ENCODE measurements at regions of chr12 and their contacts with region 1.

Region 1: DNA sequence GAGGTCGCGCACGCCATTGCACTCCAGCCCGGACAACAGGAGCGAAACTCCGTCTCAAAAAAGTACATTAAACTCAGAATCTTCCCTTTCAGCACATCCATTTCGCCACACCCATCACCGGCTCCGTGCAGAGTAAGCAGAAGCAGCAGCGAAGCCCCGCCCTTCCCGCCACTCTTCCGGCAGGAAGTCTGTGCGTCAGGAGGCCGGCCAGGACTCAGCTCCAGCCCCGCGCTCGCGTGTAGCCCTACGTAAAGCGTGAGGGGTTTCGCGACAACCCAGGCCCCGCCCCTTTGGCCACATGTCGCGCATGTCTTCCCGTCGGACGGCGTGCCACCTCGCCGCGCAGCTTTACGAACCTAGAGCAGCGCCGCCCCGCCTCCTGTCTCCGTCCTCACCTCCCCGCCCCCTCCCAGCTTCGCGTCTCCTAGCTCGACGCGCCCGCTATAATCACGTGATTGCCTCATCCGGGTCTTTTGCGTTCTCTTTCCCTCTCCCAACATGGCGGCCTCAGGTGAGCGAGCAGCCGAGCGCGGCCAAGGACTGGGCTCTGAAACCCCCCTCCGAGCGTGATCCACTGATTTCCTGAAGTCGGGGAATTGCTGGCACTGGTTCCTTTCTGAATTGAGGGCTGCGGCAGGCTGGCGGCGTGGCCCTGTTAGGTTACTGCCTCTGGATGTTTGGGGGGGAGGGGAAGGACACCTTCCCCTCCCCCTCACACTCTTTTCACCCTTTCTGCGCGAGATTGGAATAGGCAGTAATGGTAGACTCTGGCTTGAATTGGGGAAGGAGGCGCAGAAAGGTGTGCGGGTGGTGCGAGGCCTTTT is at the start of gene EIF4B:
- DNase-seq: peak; percentile 97
- ATAC-seq: peak; percentile 96
- H3K4me3 ChIP-seq: peak within 1 kb of the TSS; percentile 89 to 93 (median 92)
- H3K27ac ChIP-seq: peak within 1 kb of the TSS; percentile 99
- H3K4me1 ChIP-seq: peaks cover 47% of the 10 kb centered on the region
- H3K27me3 ChIP-seq: no peaks in the 10 kb centered on the region; a peak in 1 of 5 replicates
- CTCF ChIP-seq: peak; percentile 22; the same call in 1 of the 2 replicates
- EP300 ChIP-seq: no peak; a peak in 2 of 4 replicates
- POLR2A ChIP-seq: peak; percentile 52 to 70; a peak in 3 of 4 replicates
- RAD21 ChIP-seq: no peak
- total RNA-seq, gene EIF4B: 548 and 779 TPM in 2 replicates

Region 2: DNA sequence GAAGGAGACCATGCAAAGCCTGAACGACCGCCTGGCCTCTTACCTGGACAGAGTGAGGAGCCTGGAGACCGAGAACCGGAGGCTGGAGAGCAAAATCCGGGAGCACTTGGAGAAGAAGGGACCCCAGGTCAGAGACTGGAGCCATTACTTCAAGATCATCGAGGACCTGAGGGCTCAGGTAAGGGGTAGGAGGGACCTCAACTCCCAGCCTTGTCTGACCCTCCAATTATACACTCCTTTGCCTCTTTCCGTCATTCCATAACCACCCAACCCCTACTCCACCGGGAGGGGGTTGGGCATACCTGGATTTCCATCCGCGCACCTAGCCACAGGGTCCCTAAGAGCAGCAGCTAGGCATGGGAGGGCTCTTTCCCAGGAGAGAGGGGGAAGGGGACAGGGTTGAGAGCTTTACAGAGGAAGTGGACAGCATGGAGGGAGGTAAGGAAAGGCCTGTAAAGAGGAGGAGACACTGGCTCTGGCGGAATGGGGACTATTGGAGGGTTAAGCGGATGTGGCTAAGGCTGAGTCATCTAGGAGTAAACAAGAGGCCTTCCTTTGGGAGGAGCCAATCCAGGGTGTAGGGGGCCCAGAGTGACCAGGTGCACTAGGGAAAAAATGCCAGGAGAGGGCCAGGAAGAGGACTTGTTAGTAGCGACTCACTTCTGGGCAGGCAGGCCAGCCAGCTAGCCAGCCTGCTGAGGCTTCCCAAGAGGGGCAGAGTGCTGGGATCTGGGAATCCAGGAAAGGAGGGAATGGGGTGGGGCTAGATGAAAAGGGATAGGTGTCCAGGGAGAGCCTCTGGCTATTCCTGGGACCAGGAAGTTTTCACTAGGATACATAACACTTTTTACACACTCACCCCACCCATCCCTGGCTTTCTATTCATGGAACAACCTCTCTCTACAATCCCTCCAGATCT is 56.5 kb before region 1 on chr12:
- CTCF ChIA-PET with region 1: no interaction called
- POLR2A ChIA-PET with region 1: interaction called, 23 read pairs
- in situ Hi-C with region 1: no loop called
- intact Hi-C with region 1: no loop called
- DNase-seq: peak; percentile 98
- ATAC-seq: peak; percentile 83
- H3K4me3 ChIP-seq: peak overlapping the region; percentile 88 to 100 (median 99)
- H3K27ac ChIP-seq: peak overlapping the region; percentile 100
- H3K4me1 ChIP-seq: peaks cover 68% of the 10 kb centered on the region
- H3K27me3 ChIP-seq: peaks cover 0 to 2% of the 10 kb centered on the region in 2 experiments; a peak in 1 of 5 replicates
- CTCF ChIP-seq: peak; percentile 42; the same call in 1 of the 2 replicates
- EP300 ChIP-seq: peak in 1 of 2 experiments; percentile 90; a peak in 2 of 4 replicates
- POLR2A ChIP-seq: peak; percentile 82 to 96
- RAD21 ChIP-seq: peak; percentile 81

Region 3: DNA sequence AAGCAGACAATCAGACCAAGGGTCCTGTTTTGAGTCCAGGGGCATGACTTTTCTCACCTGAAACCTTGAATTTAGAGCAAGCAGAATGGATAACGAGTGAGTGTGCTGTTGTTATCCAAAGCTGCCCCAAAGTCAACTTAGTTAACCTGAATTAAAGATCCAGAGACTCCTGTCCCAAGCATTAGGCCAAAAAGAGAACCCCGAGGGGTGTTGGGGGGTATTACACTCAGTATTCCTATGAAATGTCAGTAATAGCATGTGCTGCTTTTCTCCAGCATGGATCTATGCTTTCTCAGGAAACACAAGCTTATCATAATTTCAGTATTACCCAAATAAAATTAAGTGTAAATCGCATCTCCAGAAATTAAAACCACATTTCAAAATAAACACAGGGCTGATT is 19.1 kb after region 1 on chr12:
- CTCF ChIA-PET with region 1: no interaction called
- POLR2A ChIA-PET with region 1: interaction called, 14 read pairs
- in situ Hi-C with region 1: no loop called
- intact Hi-C with region 1: no loop called
- DNase-seq: no peak
- ATAC-seq: peak; percentile 46; the same call in 2 of the 3 replicates
- H3K4me3 ChIP-seq: no peak overlapping the region
- H3K27ac ChIP-seq: no peak overlapping the region
- H3K4me1 ChIP-seq: peaks cover 14% of the 10 kb centered on the region
- H3K27me3 ChIP-seq: no peaks in the 10 kb centered on the region
- CTCF ChIP-seq: no peak
- EP300 ChIP-seq: no peak
- POLR2A ChIP-seq: no peak
- RAD21 ChIP-seq: no peak

Region 4: GRCh38 chr12:53047221-53048042 is 41.2 kb after region 1 on chr12:
- CTCF ChIA-PET with region 1: no interaction called
- POLR2A ChIA-PET with region 1: interaction called, 83 read pairs
- in situ Hi-C with region 1: no loop called
- intact Hi-C with region 1: no loop called
- DNase-seq: peak; percentile 44
- ATAC-seq: peak; percentile 2
- H3K4me3 ChIP-seq: peak overlapping the region; percentile 77 to 91 (median 83)
- H3K27ac ChIP-seq: peak overlapping the region; percentile 89
- H3K4me1 ChIP-seq: peaks cover 79% of the 10 kb centered on the region
- H3K27me3 ChIP-seq: no peaks in the 10 kb centered on the region; a peak in 1 of 5 replicates
- CTCF ChIP-seq: peak; percentile 3; the same call in 1 of the 2 replicates
- EP300 ChIP-seq: no peak
- POLR2A ChIP-seq: 0 out of 4 replicates have a peak, but pooled peaks of 1 of the 2 experiments have one; percentile 3
- RAD21 ChIP-seq: 0 out of 2 replicates have a peak, but pooled peaks have one; percentile 18

Region 5: DNA sequence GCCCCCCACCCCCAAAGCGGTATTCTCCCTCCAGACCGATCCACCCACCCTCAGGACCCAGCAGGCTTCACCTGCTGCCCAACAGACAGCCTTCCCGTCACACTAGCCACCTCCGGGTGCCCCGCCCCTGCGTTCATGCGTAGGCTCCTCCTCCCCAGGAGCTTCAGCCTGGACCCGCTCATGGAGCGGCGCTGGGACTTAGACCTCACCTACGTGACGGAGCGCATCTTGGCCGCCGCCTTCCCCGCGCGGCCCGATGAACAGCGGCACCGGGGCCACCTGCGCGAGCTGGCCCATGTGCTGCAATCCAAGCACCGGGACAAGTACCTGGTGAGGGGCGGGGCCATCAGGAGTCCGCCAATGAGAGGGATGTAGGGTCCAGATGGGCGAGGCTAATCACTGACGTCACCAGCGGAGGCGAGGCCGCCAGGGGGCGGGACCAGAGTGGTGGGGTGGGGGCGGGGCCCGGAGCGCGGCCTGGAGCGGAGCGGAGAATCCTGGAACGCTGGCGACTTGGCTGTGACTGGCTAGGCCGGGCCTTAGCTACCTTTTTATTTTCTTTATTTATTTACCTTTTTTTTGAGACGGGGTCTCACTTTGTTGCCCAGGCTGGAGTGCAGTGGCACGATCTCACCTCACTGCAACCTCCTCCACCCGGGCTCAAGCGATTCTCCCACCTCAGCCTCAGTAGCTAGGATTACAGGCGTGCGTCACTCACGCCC is 48.1 kb after region 1 on chr12:
- CTCF ChIA-PET with region 1: no interaction called
- POLR2A ChIA-PET with region 1: interaction called, 83 read pairs
- in situ Hi-C with region 1: no loop called
- intact Hi-C with region 1: no loop called
- DNase-seq: peak; percentile 83
- ATAC-seq: peak; percentile 19
- H3K4me3 ChIP-seq: peak overlapping the region; percentile 52 to 73 (median 60); a peak in 5 of 6 replicates
- H3K27ac ChIP-seq: peak overlapping the region; percentile 69
- H3K4me1 ChIP-seq: peaks cover 40% of the 10 kb centered on the region
- H3K27me3 ChIP-seq: no peaks in the 10 kb centered on the region
- CTCF ChIP-seq: no peak
- EP300 ChIP-seq: no peak
- POLR2A ChIP-seq: peak in 1 of 2 experiments; percentile 44; a peak in 1 of 4 replicates
- RAD21 ChIP-seq: no peak

Region 6: DNA sequence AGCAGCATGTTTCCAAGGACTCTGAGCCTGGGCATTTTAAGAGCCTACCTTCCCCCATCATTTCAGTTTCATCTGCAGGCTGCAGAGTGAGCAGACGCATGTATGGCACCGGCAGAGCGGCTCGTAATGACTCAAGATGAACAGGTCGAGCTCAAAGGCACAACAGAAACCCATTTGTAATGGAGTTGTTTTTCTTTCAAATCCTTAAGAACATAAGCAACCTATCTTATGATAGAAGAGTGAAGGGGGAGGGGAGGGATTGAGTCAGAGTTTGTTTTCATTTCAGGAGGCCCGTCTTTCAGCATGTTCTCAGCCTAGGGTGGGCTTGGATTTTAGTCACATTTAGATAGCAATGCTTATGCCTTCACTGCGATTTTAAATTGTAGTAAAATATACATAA is 800.5 kb after region 1 on chr12:
- CTCF ChIA-PET with region 1: no interaction called
- POLR2A ChIA-PET with region 1: no interaction called
- in situ Hi-C with region 1: no loop called
- intact Hi-C with region 1: no loop called
- DNase-seq: no peak
- ATAC-seq: no peak
- H3K4me3 ChIP-seq: no peak overlapping the region
- H3K27ac ChIP-seq: no peak overlapping the region
- H3K4me1 ChIP-seq: peaks cover 48% of the 10 kb centered on the region
- H3K27me3 ChIP-seq: no peaks in the 10 kb centered on the region
- CTCF ChIP-seq: no peak
- EP300 ChIP-seq: no peak
- POLR2A ChIP-seq: no peak
- RAD21 ChIP-seq: no peak

Measured in HepG2 (cell line).